IMR-90 (cell line): ENCODE measurements at regions of chr1 and their contacts with region 1.

Region 1: GRCh38 chr1:229625915-229626831 is at the starts of genes TAF5L and URB2:
- DNase-seq: peak; percentile 89
- ATAC-seq: peak; percentile 95
- H3K4me3 ChIP-seq: peak within 1 kb of the TSS; percentile 84
- H3K27ac ChIP-seq: peak within 1 kb of the TSS; percentile 70
- H3K4me1 ChIP-seq: peaks cover 6% of the 10 kb centered on the region
- H3K27me3 ChIP-seq: no peaks in the 10 kb centered on the region
- CTCF ChIP-seq: no peak
- POLR2A ChIP-seq: peak; percentile 67; the same call in 1 of the 2 replicates
- RAD21 ChIP-seq: no peak
- total RNA-seq, gene TAF5L: 15.8 and 17.9 TPM in 2 replicates
- total RNA-seq, gene URB2: 12.8 and 15.4 TPM in 2 replicates

Region 2: DNA sequence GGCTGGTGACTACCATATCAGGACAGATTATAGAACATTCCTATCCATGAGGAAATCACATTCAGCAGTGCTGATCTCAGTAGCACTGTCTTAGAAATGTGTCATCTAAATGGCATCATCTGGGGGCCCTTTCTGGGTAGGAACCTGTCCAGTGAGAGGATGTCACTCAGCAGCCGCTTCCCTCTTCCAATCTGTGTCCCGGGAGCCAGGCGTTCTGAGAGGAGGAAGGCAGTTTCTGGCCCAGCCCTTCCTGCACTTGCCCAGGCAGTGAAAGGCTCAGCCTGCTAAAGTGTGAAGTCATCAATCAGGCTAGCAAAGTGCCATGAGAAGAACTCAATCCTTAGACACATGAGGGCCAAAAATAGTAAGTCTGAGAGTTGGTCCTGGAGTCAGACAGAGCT is 329.6 kb before region 1 on chr1:
- CTCF ChIA-PET with region 1: no interaction called
- POLR2A ChIA-PET with region 1: no interaction called
- dilution Hi-C with region 1: no loop called
- in situ Hi-C with region 1: no loop called
- intact Hi-C with region 1: no loop called
- DNase-seq: peak; percentile 87
- ATAC-seq: peak; percentile 83
- H3K4me3 ChIP-seq: no peak overlapping the region
- H3K27ac ChIP-seq: peak overlapping the region; percentile 48
- H3K4me1 ChIP-seq: peaks cover 19% of the 10 kb centered on the region
- H3K27me3 ChIP-seq: no peaks in the 10 kb centered on the region
- CTCF ChIP-seq: no peak
- POLR2A ChIP-seq: no peak
- RAD21 ChIP-seq: no peak

Region 3: GRCh38 chr1:229558571-229559335 is 67.4 kb before region 1 on chr1 and contains the start of gene ABCB10:
- CTCF ChIA-PET with region 1: interaction called, 5 read pairs
- POLR2A ChIA-PET with region 1: interaction called, 3 read pairs
- dilution Hi-C with region 1: no loop called
- in situ Hi-C with region 1: loop called (anchors 5 kb)
- intact Hi-C with region 1: loop called (anchors 1 kb)
- DNase-seq: peak; percentile 96
- ATAC-seq: peak; percentile 86
- H3K4me3 ChIP-seq: peak within 1 kb of the TSS; percentile 59
- H3K27ac ChIP-seq: peak within 1 kb of the TSS; percentile 65
- H3K4me1 ChIP-seq: peaks cover 11% of the 10 kb centered on the region
- H3K27me3 ChIP-seq: no peaks in the 10 kb centered on the region
- CTCF ChIP-seq: peak; percentile 86
- POLR2A ChIP-seq: no peak
- RAD21 ChIP-seq: peak; percentile 38
- total RNA-seq, gene ABCB10: 10.9 and 13.3 TPM in 2 replicates

Region 4: GRCh38 chr1:229596925-229597699 is 29.1 kb before region 1 on chr1:
- CTCF ChIA-PET with region 1: no interaction called
- POLR2A ChIA-PET with region 1: no interaction called
- dilution Hi-C with region 1: no loop called
- in situ Hi-C with region 1: no loop called
- intact Hi-C with region 1: no loop called
- DNase-seq: peak; percentile 84
- ATAC-seq: peak; percentile 83
- H3K4me3 ChIP-seq: no peak overlapping the region
- H3K27ac ChIP-seq: peak overlapping the region; percentile 57
- H3K4me1 ChIP-seq: peaks cover 10% of the 10 kb centered on the region
- H3K27me3 ChIP-seq: no peaks in the 10 kb centered on the region
- CTCF ChIP-seq: no peak
- POLR2A ChIP-seq: no peak
- RAD21 ChIP-seq: no peak

Region 5: GRCh38 chr1:230084138-230084880 is 458.1 kb after region 1 on chr1:
- CTCF ChIA-PET with region 1: no interaction called
- POLR2A ChIA-PET with region 1: no interaction called
- dilution Hi-C with region 1: no loop called
- in situ Hi-C with region 1: no loop called
- intact Hi-C with region 1: loop called (anchors 5 kb)
- DNase-seq: peak; percentile 99
- ATAC-seq: peak; percentile 95
- H3K4me3 ChIP-seq: no peak overlapping the region
- H3K27ac ChIP-seq: peak overlapping the region; percentile 94
- H3K4me1 ChIP-seq: peaks cover 37% of the 10 kb centered on the region
- H3K27me3 ChIP-seq: no peaks in the 10 kb centered on the region
- CTCF ChIP-seq: peak; percentile 5; the same call in 1 of the 2 replicates
- POLR2A ChIP-seq: no peak; the same call in 1 of the 2 replicates
- RAD21 ChIP-seq: peak; percentile 13